Lower lobe of right lung (tissue), 2 donors: ENCODE measurements at regions of chr15 and their contacts with region 1.

Region 1: DNA sequence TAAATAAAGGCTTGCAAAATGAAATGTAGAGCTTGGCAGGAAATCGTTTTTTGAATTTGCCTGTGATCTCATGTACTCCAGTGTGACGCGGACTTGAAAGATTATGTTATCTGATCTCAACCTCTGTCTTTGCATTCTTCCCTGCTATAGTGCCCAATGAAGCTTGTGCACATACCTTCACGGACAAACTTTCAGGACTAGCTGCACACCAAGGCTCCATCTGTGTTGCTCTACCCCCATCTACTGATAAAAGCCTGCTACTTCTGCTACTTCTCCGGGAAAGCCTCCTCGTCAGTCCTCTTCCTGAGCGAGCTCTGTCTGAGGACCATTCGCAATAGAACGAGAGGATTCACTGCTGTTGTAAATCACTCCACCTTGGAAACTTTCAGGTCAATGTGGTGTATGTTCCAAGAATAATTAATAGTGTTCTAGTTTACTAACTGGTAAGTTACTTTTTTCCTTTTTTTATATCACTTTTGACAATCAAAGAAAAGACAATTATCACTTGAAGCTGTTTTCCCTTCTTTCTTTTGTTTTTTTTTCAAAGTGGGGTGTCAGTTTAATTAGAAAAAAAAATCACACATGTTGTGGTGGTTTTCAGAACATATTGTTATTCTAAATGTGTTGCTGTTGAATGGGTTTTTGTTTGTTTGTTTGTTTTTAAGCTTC is 217.6 kb downstream of the ARRDC4 start:
- DNase-seq: no peak
- ATAC-seq: peak; percentile 81
- H3K4me3 ChIP-seq: no peak overlapping the region
- H3K27ac ChIP-seq: no peak overlapping the region
- H3K4me1 ChIP-seq: no peaks in the 10 kb centered on the region
- H3K27me3 ChIP-seq: peaks cover 7% of the 10 kb centered on the region
- CTCF ChIP-seq: peak; percentile 65

Region 2: GRCh38 chr15:97909291-97909891 is 268.7 kb before region 1 on chr15:
- intact Hi-C with region 1: loop called (anchors 10 kb)
- DNase-seq: peak; percentile 63
- ATAC-seq: peak; percentile 89 to 91
- H3K4me3 ChIP-seq: no peak overlapping the region
- H3K27ac ChIP-seq: no peak overlapping the region
- H3K4me1 ChIP-seq: peaks cover 2% of the 10 kb centered on the region
- H3K27me3 ChIP-seq: peaks cover 15% of the 10 kb centered on the region
- CTCF ChIP-seq: peak; percentile 94

Region 3: GRCh38 chr15:98085003-98085639 is 92.9 kb before region 1 on chr15:
- intact Hi-C with region 1: no loop called
- DNase-seq: no peak
- ATAC-seq: no peak
- H3K4me3 ChIP-seq: no peak overlapping the region
- H3K27ac ChIP-seq: no peak overlapping the region
- H3K4me1 ChIP-seq: no peaks in the 10 kb centered on the region
- H3K27me3 ChIP-seq: no peaks in the 10 kb centered on the region
- CTCF ChIP-seq: peak; percentile 65